ENCODE measurements at regions of chr7 and their contacts with region 1.

Region 1: DNA sequence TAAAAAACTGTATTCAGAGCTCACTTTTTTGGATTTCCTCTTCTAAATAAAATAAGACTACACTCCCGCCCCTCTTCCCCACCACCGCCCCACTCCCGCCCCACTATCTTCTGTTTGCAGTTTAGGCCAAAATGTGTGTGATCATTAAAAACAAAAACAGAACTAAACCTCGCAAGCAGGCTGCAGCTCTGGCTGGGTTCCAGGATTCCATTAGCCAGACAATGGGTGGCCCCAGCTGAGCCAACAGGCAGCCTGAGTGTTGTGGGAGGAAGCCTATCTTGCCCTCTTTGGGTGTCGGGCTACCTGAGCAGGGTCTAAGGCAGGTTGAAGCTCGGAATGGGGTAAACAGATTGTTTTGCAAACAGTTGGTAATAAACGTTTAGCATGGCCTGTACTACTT is 41.7 kb downstream of the ARL4A start:
- DNase-seq: peak; percentile 94
- H3K4me3 ChIP-seq: no peak overlapping the region
- H3K27ac ChIP-seq: peak overlapping the region; percentile 92
- H3K4me1 ChIP-seq: peaks cover 48% of the 10 kb centered on the region
- H3K27me3 ChIP-seq: no peaks in the 10 kb centered on the region
- CTCF ChIP-seq: no peak
- POLR2A ChIP-seq: no peak

Region 2: DNA sequence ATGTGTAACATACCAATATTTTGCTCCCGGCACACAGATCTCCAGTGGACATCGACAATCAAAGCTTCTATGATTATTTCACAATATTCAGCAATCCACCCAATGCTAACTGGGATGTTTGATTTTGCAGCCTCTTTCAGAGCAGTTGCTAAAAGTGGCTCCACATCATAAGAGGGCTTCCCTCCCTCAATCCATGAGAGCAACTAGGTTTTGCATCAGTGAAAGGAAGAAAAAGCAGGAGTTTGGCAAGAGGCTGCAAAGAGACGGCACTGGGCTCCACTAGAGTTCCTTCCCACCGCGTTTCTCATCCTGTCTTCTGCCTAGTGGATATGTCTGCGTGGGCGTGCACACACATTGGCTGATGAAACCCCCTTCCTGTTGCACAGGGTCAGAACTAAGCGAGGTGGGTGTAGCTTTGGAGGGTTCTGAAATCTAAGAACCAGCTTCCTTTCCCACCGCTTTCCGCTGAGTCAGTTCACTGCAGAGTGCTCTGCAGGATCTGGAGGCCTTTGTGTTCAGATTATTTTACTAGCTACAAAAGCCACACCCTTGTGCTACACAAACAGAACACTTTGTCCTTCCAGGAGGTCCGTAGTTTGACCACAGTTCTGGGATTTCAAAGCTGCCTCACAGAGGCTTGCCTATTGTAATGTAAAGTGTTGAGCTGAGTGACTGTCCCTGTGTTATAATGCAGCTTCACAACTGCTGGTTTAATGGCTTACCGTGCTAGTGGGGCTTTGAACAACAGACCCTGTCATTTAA is 13.6 kb before region 1 on chr7:
- CTCF ChIA-PET with region 1: interaction called, 24 read pairs
- POLR2A ChIA-PET with region 1: interaction called, 5 read pairs
- dilution Hi-C with region 1: no loop called
- intact Hi-C with region 1: loop called (anchors 1 kb)
- DNase-seq: peak; percentile 96
- H3K4me3 ChIP-seq: peak overlapping the region in 1 of 3 experiments; percentile 1
- H3K27ac ChIP-seq: peak overlapping the region; percentile 58
- H3K4me1 ChIP-seq: peaks cover 39% of the 10 kb centered on the region
- H3K27me3 ChIP-seq: no peaks in the 10 kb centered on the region
- CTCF ChIP-seq: no peak
- POLR2A ChIP-seq: peak; percentile 64

Region 3: GRCh38 chr7:12771378-12771877 is 42.3 kb after region 1 on chr7:
- CTCF ChIA-PET with region 1: interaction called, 6 read pairs
- POLR2A ChIA-PET with region 1: interaction called, 7 read pairs
- dilution Hi-C with region 1: no loop called
- intact Hi-C with region 1: loop called (anchors 1 kb)
- DNase-seq: peak; percentile 99
- H3K4me3 ChIP-seq: peak overlapping the region in 1 of 3 experiments; percentile 38
- H3K27ac ChIP-seq: peak overlapping the region; percentile 95
- H3K4me1 ChIP-seq: peaks cover 33% of the 10 kb centered on the region
- H3K27me3 ChIP-seq: no peaks in the 10 kb centered on the region
- CTCF ChIP-seq: no peak
- POLR2A ChIP-seq: peak; percentile 81

Region 4: DNA sequence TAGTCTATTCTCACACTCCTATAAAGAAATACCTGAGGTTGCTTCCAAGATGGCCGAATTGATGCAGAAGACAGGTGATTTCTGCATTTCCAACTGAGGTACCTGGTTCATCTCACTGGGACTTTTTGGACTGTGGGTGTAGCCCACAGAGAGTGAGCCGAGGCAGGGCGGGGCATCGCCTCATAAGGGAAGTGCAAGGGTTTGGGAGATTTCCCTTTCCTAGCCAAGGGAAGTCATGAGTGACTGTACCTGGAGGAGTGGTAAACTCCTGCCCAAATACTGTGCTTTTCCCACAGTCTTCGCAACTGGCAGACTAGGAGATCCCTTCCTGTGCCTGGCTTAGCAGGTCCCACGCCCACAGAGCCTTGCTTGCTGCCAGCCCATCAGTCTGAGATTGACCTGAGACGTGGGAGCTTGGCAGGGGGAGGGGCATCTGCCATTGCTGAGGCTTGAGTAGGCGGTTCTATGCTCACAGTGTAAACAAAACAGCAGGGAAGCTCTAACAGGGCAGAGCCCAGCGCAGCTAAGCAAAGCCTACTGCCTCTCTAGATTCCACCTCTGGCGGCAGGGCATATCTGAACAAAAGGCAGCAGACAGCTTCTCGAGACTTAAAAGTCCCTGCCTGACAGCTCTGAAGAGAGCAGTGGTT is 110.5 kb after region 1 on chr7:
- CTCF ChIA-PET with region 1: no interaction called
- POLR2A ChIA-PET with region 1: no interaction called
- dilution Hi-C with region 1: no loop called
- intact Hi-C with region 1: no loop called
- DNase-seq: no peak
- H3K4me3 ChIP-seq: no peak overlapping the region
- H3K27ac ChIP-seq: no peak overlapping the region
- H3K4me1 ChIP-seq: no peaks in the 10 kb centered on the region
- H3K27me3 ChIP-seq: no peaks in the 10 kb centered on the region
- CTCF ChIP-seq: no peak
- POLR2A ChIP-seq: no peak

Region 5: GRCh38 chr7:13028825-13029099 is 299.6 kb after region 1 on chr7:
- CTCF ChIA-PET with region 1: no interaction called
- POLR2A ChIA-PET with region 1: no interaction called
- dilution Hi-C with region 1: no loop called
- intact Hi-C with region 1: loop called (anchors 1 kb)
- DNase-seq: peak; percentile 80
- H3K4me3 ChIP-seq: no peak overlapping the region
- H3K27ac ChIP-seq: peak overlapping the region; percentile 47
- H3K4me1 ChIP-seq: peaks cover 18% of the 10 kb centered on the region
- H3K27me3 ChIP-seq: no peaks in the 10 kb centered on the region
- CTCF ChIP-seq: no peak
- POLR2A ChIP-seq: no peak

Measured in endothelial cell of umbilical vein (primary cell).